ENCODE measurements at regions of chr17 and their contacts with region 1.

Region 1: DNA sequence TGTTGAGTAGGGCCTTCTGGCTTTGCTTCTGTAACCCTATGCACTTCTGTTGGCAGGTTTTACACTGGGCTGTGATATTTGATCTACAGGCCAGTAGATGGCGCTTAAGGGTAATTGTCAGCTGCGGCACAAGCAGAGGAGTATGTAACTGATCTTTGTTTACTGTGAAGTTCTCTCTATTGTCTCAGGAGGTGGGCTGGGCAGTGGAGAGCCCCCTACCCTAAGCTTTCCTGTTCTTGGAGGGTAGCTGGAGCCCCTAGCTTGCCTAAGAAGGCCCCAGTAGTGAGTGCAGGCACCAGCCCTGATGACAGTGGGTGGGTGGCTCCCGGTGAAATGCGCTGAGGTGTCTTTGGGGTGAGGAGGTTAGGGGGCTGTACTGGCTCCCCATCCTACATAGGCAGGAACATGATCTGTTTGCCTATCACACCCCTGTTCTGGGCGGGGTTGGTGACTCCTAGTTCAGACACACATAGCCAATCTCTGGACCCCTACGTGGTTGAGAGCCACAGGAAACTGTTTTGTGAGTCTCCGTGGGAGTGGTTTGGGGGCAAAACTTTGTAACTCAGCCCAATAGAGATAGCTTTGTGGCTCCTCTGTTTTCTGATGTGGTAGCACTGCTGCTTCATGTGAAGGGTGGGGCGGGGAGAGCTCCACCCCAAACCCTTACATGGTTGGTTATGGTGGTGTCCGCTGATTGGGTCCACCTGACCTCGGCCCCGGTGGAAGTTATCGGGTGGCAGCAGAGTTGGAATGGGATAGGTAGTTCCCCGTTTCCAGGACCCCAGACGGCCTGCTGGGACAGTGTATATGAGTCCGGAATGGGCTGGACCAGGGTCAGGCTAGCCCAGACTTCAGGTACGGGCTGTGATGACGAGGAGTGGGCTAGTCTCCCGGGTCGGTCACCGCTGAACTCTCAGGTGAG is 60.4 kb downstream of the SLFN11 start:
- DNase-seq: peak; percentile 83 to 96
- ATAC-seq: peak; percentile 87 to 95 (median 89)
- H3K4me3 ChIP-seq: peak overlapping the region; percentile 73
- H3K4me3 Mint-ChIP-seq: peak overlapping the region; percentile 99
- H3K27ac ChIP-seq: peak overlapping the region; percentile 90
- H3K27ac Mint-ChIP-seq: peak overlapping the region; percentile 99 to 100
- H3K4me1 ChIP-seq: peaks cover 22% of the 10 kb centered on the region
- H3K4me1 Mint-ChIP-seq: peaks cover 47 to 55% of the 10 kb centered on the region in 2 donors
- H3K27me3 ChIP-seq: no peaks in the 10 kb centered on the region
- H3K27me3 Mint-ChIP-seq: no peaks in the 10 kb centered on the region
- CTCF ChIP-seq: peak; percentile 93

Region 2: DNA sequence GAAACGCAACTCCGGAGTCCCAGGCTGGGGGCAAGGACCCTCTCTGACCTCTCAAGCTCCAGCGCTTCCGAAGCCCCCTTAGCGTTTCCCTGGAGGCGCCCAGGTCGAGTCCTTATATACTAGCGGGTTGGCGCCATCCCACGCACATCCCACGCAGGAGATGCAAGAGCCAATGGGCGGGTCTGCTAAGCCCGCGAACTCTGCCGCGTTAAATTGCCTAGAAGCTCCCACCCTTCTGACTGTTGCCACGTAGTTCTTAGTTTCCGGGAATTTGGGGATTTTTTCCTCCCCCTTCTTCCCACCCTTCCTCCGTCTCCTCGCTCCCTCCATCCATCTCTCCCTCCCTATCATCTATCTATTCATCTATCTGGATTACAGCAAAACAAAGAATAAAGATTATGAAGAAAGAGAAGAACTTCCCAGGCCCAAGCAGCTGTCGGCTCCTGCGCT is 60.5 kb after region 1 on chr17 and contains the start of gene SLFN11:
- intact Hi-C with region 1: loop called (anchors 2 kb)
- DNase-seq: peak; percentile 62 to 93
- ATAC-seq: peak; percentile 78 to 86 (median 83)
- H3K4me3 ChIP-seq: peak within 1 kb of the TSS; percentile 67
- H3K4me3 Mint-ChIP-seq: peak within 1 kb of the TSS; percentile 98
- H3K27ac ChIP-seq: peak within 1 kb of the TSS; percentile 88
- H3K27ac Mint-ChIP-seq: peak within 1 kb of the TSS; percentile 95 to 97
- H3K4me1 ChIP-seq: peaks cover 10% of the 10 kb centered on the region
- H3K4me1 Mint-ChIP-seq: peaks cover 23 to 37% of the 10 kb centered on the region in 2 donors
- H3K27me3 ChIP-seq: no peaks in the 10 kb centered on the region
- H3K27me3 Mint-ChIP-seq: no peaks in the 10 kb centered on the region
- CTCF ChIP-seq: no peak
- total RNA-seq, gene SLFN11: 22.9 to 31.8 (median 26.8) TPM

Region 3: GRCh38 chr17:35448214-35448898 is 135.3 kb after region 1 on chr17 and contains the start of gene SLFN13:
- intact Hi-C with region 1: loop called (anchors 1 kb)
- DNase-seq: peak; percentile 80 to 91
- ATAC-seq: peak; percentile 79 to 91 (median 86)
- H3K4me3 ChIP-seq: peak within 1 kb of the TSS; percentile 91
- H3K4me3 Mint-ChIP-seq: peak within 1 kb of the TSS; percentile 98
- H3K27ac ChIP-seq: peak within 1 kb of the TSS; percentile 97
- H3K27ac Mint-ChIP-seq: peak within 1 kb of the TSS; percentile 96 to 98
- H3K4me1 ChIP-seq: peaks cover 28% of the 10 kb centered on the region
- H3K4me1 Mint-ChIP-seq: peaks cover 44 to 46% of the 10 kb centered on the region in 2 donors
- H3K27me3 ChIP-seq: no peaks in the 10 kb centered on the region
- H3K27me3 Mint-ChIP-seq: no peaks in the 10 kb centered on the region
- CTCF ChIP-seq: no peak
- total RNA-seq, gene SLFN13: 85.9 to 182 (median 129) TPM

Region 4: GRCh38 chr17:35578197-35578928 is 265.3 kb after region 1 on chr17 and contains the start of gene PEX12:
- intact Hi-C with region 1: loop called (anchors 5 kb)
- DNase-seq: peak; percentile 76 to 96
- ATAC-seq: peak; percentile 91 to 98 (median 96)
- H3K4me3 ChIP-seq: peak within 1 kb of the TSS; percentile 85
- H3K4me3 Mint-ChIP-seq: peak within 1 kb of the TSS; percentile 96
- H3K27ac ChIP-seq: peak within 1 kb of the TSS; percentile 92
- H3K27ac Mint-ChIP-seq: peak within 1 kb of the TSS; percentile 99
- H3K4me1 ChIP-seq: peaks cover 13% of the 10 kb centered on the region
- H3K4me1 Mint-ChIP-seq: peaks cover 19 to 20% of the 10 kb centered on the region in 2 donors
- H3K27me3 ChIP-seq: no peaks in the 10 kb centered on the region
- H3K27me3 Mint-ChIP-seq: no peaks in the 10 kb centered on the region
- CTCF ChIP-seq: no peak
- total RNA-seq, gene PEX12: 2.5 to 3.0 (median 2.9) TPM

Measured in natural killer cell (primary cell).